IMR-90 (cell line): ENCODE measurements at regions of chr1 and their contacts with region 1.

Region 1: GRCh38 chr1:176559878-176560277 is 96.9 kb downstream of the PAPPA2 start:
- DNase-seq: peak; percentile 53
- ATAC-seq: peak; percentile 79
- H3K4me3 ChIP-seq: no peak overlapping the region
- H3K27ac ChIP-seq: no peak overlapping the region
- H3K4me1 ChIP-seq: no peaks in the 10 kb centered on the region
- H3K27me3 ChIP-seq: no peaks in the 10 kb centered on the region
- CTCF ChIP-seq: peak; percentile 74
- POLR2A ChIP-seq: no peak
- RAD21 ChIP-seq: peak; percentile 81

Region 2: DNA sequence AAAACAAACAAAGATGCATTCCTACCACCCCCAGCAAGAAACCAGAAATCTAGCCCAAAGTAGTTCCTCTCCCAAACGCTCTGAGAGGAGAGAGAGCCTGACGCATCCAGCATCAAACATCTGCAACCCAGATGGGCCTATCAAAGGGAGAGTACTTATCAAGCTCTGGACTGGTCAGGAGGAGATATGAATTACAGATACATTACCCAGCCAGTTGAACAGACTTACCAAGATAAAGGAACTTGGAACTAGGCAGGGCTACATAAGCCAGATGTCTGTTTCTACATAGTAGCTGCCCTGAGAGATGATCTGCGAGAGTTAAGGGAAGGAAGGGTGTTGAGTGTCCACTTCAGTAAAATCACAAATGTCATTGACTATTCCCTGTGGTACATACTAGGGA is 41.5 kb after region 1 on chr1:
- CTCF ChIA-PET with region 1: no interaction called
- POLR2A ChIA-PET with region 1: no interaction called
- dilution Hi-C with region 1: no loop called
- in situ Hi-C with region 1: no loop called
- intact Hi-C with region 1: no loop called
- DNase-seq: no peak
- ATAC-seq: no peak
- H3K4me3 ChIP-seq: no peak overlapping the region
- H3K27ac ChIP-seq: no peak overlapping the region
- H3K4me1 ChIP-seq: no peaks in the 10 kb centered on the region
- H3K27me3 ChIP-seq: no peaks in the 10 kb centered on the region
- CTCF ChIP-seq: no peak
- POLR2A ChIP-seq: no peak
- RAD21 ChIP-seq: no peak

Region 3: DNA sequence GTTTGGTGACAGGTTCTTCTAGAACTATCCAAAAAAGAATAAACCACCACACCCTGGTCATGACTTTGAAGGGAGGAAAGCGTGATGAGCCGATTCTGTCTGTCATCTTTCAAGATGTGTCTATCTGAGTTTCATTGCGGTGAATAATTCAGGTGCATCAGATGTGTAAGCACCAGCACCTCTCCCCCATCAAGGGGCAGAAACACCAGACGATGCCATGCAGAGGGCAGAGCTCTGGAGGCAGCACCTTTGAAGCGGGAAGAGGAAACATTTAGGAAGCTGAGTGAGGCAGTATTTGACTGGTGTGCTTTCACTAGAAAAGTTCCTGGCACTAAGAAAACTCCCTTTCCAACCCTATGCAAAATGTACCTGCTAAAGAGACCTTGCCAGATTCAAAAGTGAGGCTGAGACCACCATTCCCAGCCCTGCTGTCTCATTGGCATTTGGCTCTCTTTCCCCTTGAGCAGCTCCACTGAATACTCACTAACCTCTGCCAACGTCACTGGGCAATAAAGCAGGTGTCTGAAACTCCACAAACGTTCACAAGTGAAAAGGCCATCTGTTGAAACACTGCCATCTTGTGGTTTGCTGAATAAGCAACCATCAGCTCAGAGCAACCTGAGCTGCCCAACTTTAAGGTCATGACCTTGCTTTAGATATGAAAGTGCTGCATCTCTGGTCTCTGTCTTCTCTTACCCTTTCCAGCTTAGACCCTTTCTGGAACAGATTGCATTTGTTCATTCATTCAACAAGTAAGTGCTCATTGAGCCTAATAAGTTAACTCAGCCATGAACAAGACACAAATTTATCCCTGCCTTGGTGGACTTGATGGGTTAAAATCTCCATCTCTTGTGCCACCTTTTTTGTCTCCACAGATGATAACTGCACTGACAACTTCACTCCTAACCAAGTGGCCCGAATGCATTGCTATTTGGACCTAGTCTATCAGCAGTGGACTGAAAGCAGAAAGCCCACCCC is 131.7 kb after region 1 on chr1:
- CTCF ChIA-PET with region 1: no interaction called
- POLR2A ChIA-PET with region 1: no interaction called
- dilution Hi-C with region 1: no loop called
- in situ Hi-C with region 1: no loop called
- intact Hi-C with region 1: loop called (anchors 1 kb)
- DNase-seq: peak; percentile 43
- ATAC-seq: peak; percentile 56
- H3K4me3 ChIP-seq: no peak overlapping the region
- H3K27ac ChIP-seq: no peak overlapping the region
- H3K4me1 ChIP-seq: no peaks in the 10 kb centered on the region
- H3K27me3 ChIP-seq: no peaks in the 10 kb centered on the region
- CTCF ChIP-seq: peak; percentile 58
- POLR2A ChIP-seq: no peak
- RAD21 ChIP-seq: peak; percentile 50

Region 4: DNA sequence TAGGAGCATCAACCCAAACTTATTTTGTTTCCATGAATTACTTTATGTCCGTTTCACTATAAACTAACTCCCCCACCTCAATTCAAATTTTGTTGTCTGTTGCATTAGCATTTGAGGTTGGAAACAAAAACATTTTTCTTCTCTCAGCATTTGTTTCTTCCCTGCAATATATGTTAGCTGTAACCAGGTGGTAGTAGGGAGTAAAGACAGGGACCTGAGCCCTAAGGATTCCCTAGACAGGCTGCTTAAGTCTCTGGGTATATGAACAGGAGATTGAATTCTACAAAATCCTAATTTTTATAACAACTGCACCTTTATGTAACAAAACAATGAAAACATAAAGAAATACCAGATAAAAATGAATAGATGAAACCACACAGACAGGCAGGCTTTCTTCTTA is 145.7 kb after region 1 on chr1:
- CTCF ChIA-PET with region 1: no interaction called
- POLR2A ChIA-PET with region 1: no interaction called
- dilution Hi-C with region 1: no loop called
- in situ Hi-C with region 1: no loop called
- intact Hi-C with region 1: no loop called
- DNase-seq: no peak
- ATAC-seq: no peak
- H3K4me3 ChIP-seq: no peak overlapping the region
- H3K27ac ChIP-seq: no peak overlapping the region
- H3K4me1 ChIP-seq: no peaks in the 10 kb centered on the region
- H3K27me3 ChIP-seq: no peaks in the 10 kb centered on the region
- CTCF ChIP-seq: no peak
- POLR2A ChIP-seq: no peak
- RAD21 ChIP-seq: no peak

Region 5: GRCh38 chr1:176843352-176844297 is 283.7 kb after region 1 on chr1:
- CTCF ChIA-PET with region 1: no interaction called
- POLR2A ChIA-PET with region 1: no interaction called
- dilution Hi-C with region 1: no loop called
- in situ Hi-C with region 1: no loop called
- intact Hi-C with region 1: loop called (anchors 1 kb)
- DNase-seq: peak; percentile 41
- ATAC-seq: peak; percentile 61
- H3K4me3 ChIP-seq: no peak overlapping the region
- H3K27ac ChIP-seq: no peak overlapping the region
- H3K4me1 ChIP-seq: no peaks in the 10 kb centered on the region
- H3K27me3 ChIP-seq: no peaks in the 10 kb centered on the region
- CTCF ChIP-seq: peak; percentile 53
- POLR2A ChIP-seq: no peak
- RAD21 ChIP-seq: peak; percentile 65

Region 6: GRCh38 chr1:176880954-176881595 is 321.2 kb after region 1 on chr1:
- CTCF ChIA-PET with region 1: no interaction called
- POLR2A ChIA-PET with region 1: no interaction called
- dilution Hi-C with region 1: no loop called
- in situ Hi-C with region 1: loop called (anchors 5 kb)
- intact Hi-C with region 1: loop called (anchors 1 kb)
- DNase-seq: peak; percentile 62
- ATAC-seq: peak; percentile 98
- H3K4me3 ChIP-seq: no peak overlapping the region
- H3K27ac ChIP-seq: no peak overlapping the region
- H3K4me1 ChIP-seq: no peaks in the 10 kb centered on the region
- H3K27me3 ChIP-seq: no peaks in the 10 kb centered on the region
- CTCF ChIP-seq: peak; percentile 73
- POLR2A ChIP-seq: no peak
- RAD21 ChIP-seq: peak; percentile 73

Region 7: DNA sequence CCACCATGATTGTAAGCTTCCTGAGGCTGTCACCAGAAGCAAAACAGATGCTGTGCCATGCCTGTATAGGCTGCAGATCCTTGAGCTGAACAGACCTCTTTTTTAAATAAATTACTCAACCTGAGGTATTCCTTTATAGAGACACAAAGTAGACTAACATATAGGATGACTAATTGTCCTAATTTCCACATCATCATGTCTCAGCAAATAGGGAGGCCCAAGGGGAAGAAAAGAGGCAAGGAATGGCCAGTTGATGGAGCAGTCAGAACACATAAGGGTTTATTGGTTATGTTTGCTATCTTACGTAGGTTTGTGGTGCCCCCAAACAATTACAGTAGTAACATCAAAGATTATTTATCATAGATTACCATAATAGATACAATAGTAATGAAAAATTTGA is 1660.2 kb after region 1 on chr1:
- CTCF ChIA-PET with region 1: no interaction called
- POLR2A ChIA-PET with region 1: no interaction called
- dilution Hi-C with region 1: no loop called
- in situ Hi-C with region 1: no loop called
- intact Hi-C with region 1: no loop called
- DNase-seq: peak; percentile 65
- ATAC-seq: peak; percentile 42; the same call in 1 of the 2 replicates
- H3K4me3 ChIP-seq: no peak overlapping the region
- H3K27ac ChIP-seq: no peak overlapping the region
- H3K4me1 ChIP-seq: peaks cover 2% of the 10 kb centered on the region; the same call in 1 of the 2 replicates
- H3K27me3 ChIP-seq: no peaks in the 10 kb centered on the region
- CTCF ChIP-seq: no peak
- POLR2A ChIP-seq: no peak
- RAD21 ChIP-seq: no peak